ENCODE measurements at regions of chr7 and their contacts with region 1.

Region 1: DNA sequence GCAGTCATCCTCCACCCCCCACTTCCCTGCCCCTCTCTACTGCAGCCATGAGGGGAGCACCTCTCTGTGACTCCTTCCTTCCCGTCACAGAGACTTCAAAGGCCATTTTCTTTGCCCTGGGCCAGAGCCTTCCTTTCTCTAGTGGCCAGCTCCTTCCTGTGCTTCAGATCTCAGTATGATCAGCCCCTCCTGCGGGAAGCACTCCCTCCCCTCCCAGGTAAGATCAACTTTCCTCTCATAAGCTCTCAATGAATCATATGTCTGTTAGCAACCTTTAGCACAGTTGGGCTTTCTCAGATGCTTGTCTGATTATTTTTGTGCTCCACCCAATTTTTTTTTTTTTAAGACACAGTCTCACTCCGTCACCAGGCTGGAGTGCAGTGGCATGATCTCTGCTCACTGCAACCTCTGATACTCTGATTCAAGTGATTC is 241.0 kb upstream of the PRSS1 start:
- DNase-seq: peak in 5 of 9 experiments; percentile 16 to 51 (median 29)
- ATAC-seq: peak; percentile 76
- H3K4me3 ChIP-seq: no peak overlapping the region
- H3K4me3 Mint-ChIP-seq: peak overlapping the region; percentile 26
- H3K27ac ChIP-seq: no peak overlapping the region
- H3K27ac Mint-ChIP-seq: peak overlapping the region; percentile 81
- H3K4me1 ChIP-seq: peaks cover 31% of the 10 kb centered on the region
- H3K4me1 Mint-ChIP-seq: peaks cover 37% of the 10 kb centered on the region
- H3K27me3 ChIP-seq: no peaks in the 10 kb centered on the region
- H3K27me3 Mint-ChIP-seq: no peaks in the 10 kb centered on the region
- CTCF ChIP-seq: no peak

Region 2: DNA sequence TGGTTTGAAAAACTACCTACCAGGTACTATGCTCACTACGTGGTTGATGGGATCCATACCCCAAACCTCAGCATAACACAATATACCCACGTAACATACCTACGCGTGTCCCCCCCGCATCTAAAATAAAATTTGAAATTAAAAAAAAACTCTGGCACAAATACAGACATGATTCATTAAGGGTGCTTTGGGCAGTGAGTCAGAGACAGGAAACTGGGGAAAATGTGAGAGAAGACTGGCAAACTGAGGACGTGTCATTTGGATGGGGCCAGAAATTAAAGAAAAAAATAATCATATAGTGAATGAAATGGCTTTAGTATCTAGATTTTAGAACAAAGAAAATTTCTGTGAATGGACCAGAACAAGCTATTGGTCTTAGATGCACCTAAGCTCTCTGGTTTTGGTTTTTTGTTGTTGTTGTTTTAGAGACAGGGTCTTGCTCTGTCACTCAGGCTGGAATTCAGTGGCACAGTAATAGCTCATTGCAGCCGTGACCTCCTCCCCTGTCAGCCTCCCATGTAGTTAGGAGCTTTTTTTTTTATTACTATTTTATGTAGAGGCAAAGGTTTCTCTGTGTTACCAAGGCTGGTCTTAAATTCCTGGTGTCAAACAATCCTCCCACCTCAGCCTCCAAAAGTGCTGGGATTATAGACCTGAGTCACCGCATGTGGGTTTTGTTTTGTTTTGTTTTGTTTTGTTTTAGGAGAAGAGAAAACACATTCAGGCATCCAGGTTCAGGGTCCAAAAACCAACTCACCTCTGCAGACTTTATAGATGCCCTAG is 244.5 kb before region 1 on chr7:
- CTCF ChIA-PET with region 1: no interaction called
- POLR2A ChIA-PET with region 1: no interaction called
- intact Hi-C with region 1: no loop called
- DNase-seq: no peak
- ATAC-seq: no peak
- H3K4me3 ChIP-seq: no peak overlapping the region
- H3K4me3 Mint-ChIP-seq: no peak overlapping the region
- H3K27ac ChIP-seq: no peak overlapping the region
- H3K27ac Mint-ChIP-seq: no peak overlapping the region
- H3K4me1 ChIP-seq: no peaks in the 10 kb centered on the region
- H3K4me1 Mint-ChIP-seq: no peaks in the 10 kb centered on the region
- H3K27me3 ChIP-seq: no peaks in the 10 kb centered on the region
- H3K27me3 Mint-ChIP-seq: peaks cover 16% of the 10 kb centered on the region
- CTCF ChIP-seq: no peak

Region 3: DNA sequence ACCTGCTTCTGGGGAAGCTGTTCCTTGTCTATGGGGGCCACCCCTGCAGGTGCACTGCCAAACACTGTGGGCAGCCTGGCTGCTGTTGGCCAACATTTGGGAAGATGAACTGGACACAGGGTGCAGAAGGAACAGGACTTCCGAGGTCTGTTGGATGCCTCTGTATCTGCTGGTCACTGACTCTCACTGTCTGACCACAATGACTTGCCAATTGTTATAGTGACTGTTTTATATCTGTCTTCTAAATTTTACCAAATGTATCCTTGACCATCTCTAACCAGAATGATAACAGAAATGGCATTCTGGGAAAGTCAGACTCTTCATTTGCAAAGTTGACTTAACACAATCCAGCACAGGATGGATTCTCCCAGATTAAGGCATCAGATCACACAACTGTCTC is 36.5 kb before region 1 on chr7:
- CTCF ChIA-PET with region 1: no interaction called
- POLR2A ChIA-PET with region 1: interaction called, 3 read pairs
- intact Hi-C with region 1: loop called in 1 of 2 experiments (anchors 2 kb)
- DNase-seq: no peak
- ATAC-seq: no peak
- H3K4me3 ChIP-seq: no peak overlapping the region
- H3K4me3 Mint-ChIP-seq: no peak overlapping the region
- H3K27ac ChIP-seq: no peak overlapping the region
- H3K27ac Mint-ChIP-seq: no peak overlapping the region
- H3K4me1 ChIP-seq: peaks cover 48% of the 10 kb centered on the region
- H3K4me1 Mint-ChIP-seq: peaks cover 79% of the 10 kb centered on the region
- H3K27me3 ChIP-seq: no peaks in the 10 kb centered on the region
- H3K27me3 Mint-ChIP-seq: no peaks in the 10 kb centered on the region
- CTCF ChIP-seq: no peak

Region 4: DNA sequence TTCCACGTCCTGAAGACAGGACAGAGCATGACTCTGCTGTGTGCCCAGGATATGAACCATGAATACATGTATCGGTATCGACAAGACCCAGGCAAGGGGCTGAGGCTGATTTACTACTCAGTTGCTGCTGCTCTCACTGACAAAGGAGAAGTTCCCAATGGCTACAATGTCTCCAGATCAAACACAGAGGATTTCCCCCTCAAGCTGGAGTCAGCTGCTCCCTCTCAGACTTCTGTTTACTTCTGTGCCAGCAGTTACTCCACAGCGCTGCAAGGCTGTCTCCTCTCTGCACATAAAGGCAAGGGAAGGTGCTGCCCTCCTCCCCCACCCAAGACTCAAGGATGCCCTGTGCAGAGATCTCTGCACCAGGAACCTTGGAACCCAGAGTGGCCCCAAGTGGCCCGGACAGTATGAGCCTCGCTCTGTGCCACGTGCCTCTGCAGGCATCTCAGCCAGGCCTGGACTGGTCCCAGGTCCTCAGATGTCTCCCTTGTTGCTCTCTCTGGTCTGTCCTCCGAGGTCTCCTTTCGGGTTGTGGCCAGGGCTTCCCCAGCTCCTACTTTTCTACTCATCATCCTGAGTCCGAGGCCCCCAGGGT is 20.1 kb before region 1 on chr7:
- CTCF ChIA-PET with region 1: interaction called, 11 read pairs
- POLR2A ChIA-PET with region 1: no interaction called
- intact Hi-C with region 1: loop called in 1 of 2 experiments (anchors 1 kb)
- DNase-seq: no peak
- ATAC-seq: no peak
- H3K4me3 ChIP-seq: no peak overlapping the region
- H3K4me3 Mint-ChIP-seq: no peak overlapping the region
- H3K27ac ChIP-seq: no peak overlapping the region
- H3K27ac Mint-ChIP-seq: peak overlapping the region; percentile 52
- H3K4me1 ChIP-seq: peaks cover 15% of the 10 kb centered on the region
- H3K4me1 Mint-ChIP-seq: peaks cover 46% of the 10 kb centered on the region
- H3K27me3 ChIP-seq: no peaks in the 10 kb centered on the region
- H3K27me3 Mint-ChIP-seq: no peaks in the 10 kb centered on the region
- CTCF ChIP-seq: no peak

Measured in CD8-positive, alpha-beta T cell (primary cell).